ENCODE measurements at regions of chr3 and their contacts with region 1.

Region 1: GRCh38 chr3:105366326-105367062 is at the start of gene ALCAM:
- DNase-seq: peak; percentile 99
- ATAC-seq: peak; percentile 72
- H3K4me3 ChIP-seq: peak within 1 kb of the TSS; percentile 83
- H3K27ac ChIP-seq: peak within 1 kb of the TSS; percentile 96
- H3K4me1 ChIP-seq: peaks cover 49% of the 10 kb centered on the region
- H3K27me3 ChIP-seq: no peaks in the 10 kb centered on the region
- CTCF ChIP-seq: peak; percentile 76
- total RNA-seq, gene ALCAM: 168 and 169 TPM in 2 replicates

Region 2: DNA sequence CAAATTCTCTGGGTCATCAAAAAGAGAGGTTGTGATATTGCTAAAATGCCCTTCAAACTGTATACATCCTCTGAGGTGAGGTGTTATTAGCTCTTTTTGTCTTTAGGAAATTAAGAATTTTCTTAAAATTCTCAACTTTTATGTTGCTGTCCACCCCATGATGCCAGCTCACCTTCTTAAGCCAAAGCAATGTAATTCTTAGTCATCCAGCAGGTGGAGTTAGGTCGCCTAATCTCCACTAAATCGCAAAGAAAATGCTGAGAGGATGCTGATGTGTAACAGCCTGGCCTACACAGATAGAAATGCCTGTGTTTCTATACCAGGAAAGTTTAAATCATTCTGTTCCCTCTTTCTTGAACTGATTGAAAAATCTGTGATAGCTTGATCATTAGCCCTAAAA is 769.9 kb before region 1 on chr3:
- CTCF ChIA-PET with region 1: interaction called, 5 read pairs
- POLR2A ChIA-PET with region 1: no interaction called
- intact Hi-C with region 1: loop called (anchors 1 kb)
- DNase-seq: peak; percentile 84
- ATAC-seq: peak; percentile 82
- H3K4me3 ChIP-seq: no peak overlapping the region
- H3K27ac ChIP-seq: peak overlapping the region; percentile 38
- H3K4me1 ChIP-seq: peaks cover 28% of the 10 kb centered on the region
- H3K27me3 ChIP-seq: no peaks in the 10 kb centered on the region
- CTCF ChIP-seq: peak; percentile 86

Region 3: DNA sequence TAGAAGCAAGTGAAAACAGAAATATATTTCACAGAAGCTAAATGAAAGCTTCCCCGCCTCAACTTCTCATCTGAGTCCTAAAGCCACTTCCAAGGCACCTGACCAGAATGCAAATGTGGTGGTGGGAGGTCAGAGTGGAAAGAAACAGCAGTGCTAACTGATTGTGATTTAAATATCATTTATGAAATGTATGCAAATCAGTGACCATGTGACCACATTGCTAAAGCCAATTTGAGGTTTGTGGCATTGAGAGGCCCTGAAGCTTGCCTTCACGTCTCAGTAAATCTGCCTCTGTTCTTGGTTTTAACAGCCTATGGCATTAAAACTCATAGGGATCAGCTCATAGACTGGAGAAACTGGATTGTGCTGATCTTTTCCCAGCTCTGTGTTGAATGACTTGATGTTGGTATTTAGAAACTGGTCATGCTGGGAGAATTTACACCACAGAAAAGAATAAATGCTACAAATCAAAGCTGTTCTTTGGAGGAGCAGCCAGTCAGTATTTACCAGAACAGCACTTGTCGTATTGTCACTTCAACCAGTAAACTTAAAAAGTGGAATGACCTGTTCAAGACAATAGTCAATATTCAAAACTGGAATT is 481.2 kb before region 1 on chr3:
- CTCF ChIA-PET with region 1: interaction called, 3 read pairs
- POLR2A ChIA-PET with region 1: no interaction called
- intact Hi-C with region 1: loop called (anchors 1 kb)
- DNase-seq: peak; percentile 89
- ATAC-seq: peak; percentile 72
- H3K4me3 ChIP-seq: peak overlapping the region; percentile 8; the same call in 1 of the 2 replicates
- H3K27ac ChIP-seq: peak overlapping the region; percentile 74
- H3K4me1 ChIP-seq: peaks cover 28% of the 10 kb centered on the region
- H3K27me3 ChIP-seq: no peaks in the 10 kb centered on the region
- CTCF ChIP-seq: no peak

Region 4: GRCh38 chr3:105118905-105119304 is 247.6 kb before region 1 on chr3:
- CTCF ChIA-PET with region 1: no interaction called
- POLR2A ChIA-PET with region 1: interaction called, 5 read pairs
- intact Hi-C with region 1: loop called (anchors 1 kb)
- DNase-seq: peak; percentile 97
- ATAC-seq: peak; percentile 72
- H3K4me3 ChIP-seq: no peak overlapping the region
- H3K27ac ChIP-seq: peak overlapping the region; percentile 91
- H3K4me1 ChIP-seq: peaks cover 17% of the 10 kb centered on the region
- H3K27me3 ChIP-seq: no peaks in the 10 kb centered on the region
- CTCF ChIP-seq: no peak

Region 5: GRCh38 chr3:105260385-105260784 is 106.1 kb before region 1 on chr3:
- CTCF ChIA-PET with region 1: no interaction called
- POLR2A ChIA-PET with region 1: no interaction called
- intact Hi-C with region 1: no loop called
- DNase-seq: no peak
- ATAC-seq: no peak
- H3K4me3 ChIP-seq: no peak overlapping the region
- H3K27ac ChIP-seq: no peak overlapping the region
- H3K4me1 ChIP-seq: no peaks in the 10 kb centered on the region
- H3K27me3 ChIP-seq: no peaks in the 10 kb centered on the region
- CTCF ChIP-seq: no peak

Region 6: DNA sequence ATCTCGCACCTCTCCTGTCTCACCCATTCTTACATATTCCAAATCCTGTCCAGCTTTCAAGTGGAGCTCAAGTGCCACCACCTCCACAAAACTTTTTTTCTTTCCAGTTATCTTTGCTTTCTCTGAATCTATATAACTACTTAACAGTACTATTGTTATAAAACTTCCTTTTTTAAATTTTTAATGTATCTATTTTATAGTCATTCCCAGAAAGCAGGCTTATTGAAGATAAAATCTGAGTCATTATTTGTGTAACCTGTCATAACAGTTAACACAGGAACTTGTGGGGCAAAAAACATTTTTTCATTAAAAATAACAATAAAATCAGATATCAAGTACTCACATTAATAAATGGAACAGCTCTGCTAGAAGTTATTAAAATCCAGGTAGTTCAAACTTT is 73.1 kb before region 1 on chr3:
- CTCF ChIA-PET with region 1: no interaction called
- POLR2A ChIA-PET with region 1: no interaction called
- intact Hi-C with region 1: loop called (anchors 2 kb)
- DNase-seq: peak; percentile 60
- ATAC-seq: peak; percentile 92
- H3K4me3 ChIP-seq: no peak overlapping the region
- H3K27ac ChIP-seq: no peak overlapping the region
- H3K4me1 ChIP-seq: peaks cover 13% of the 10 kb centered on the region
- H3K27me3 ChIP-seq: no peaks in the 10 kb centered on the region
- CTCF ChIP-seq: no peak

Region 7: GRCh38 chr3:105322570-105323273 is 43.8 kb before region 1 on chr3:
- CTCF ChIA-PET with region 1: no interaction called
- POLR2A ChIA-PET with region 1: no interaction called
- intact Hi-C with region 1: no loop called
- DNase-seq: no peak
- ATAC-seq: no peak
- H3K4me3 ChIP-seq: no peak overlapping the region
- H3K27ac ChIP-seq: no peak overlapping the region
- H3K4me1 ChIP-seq: peaks cover 7% of the 10 kb centered on the region
- H3K27me3 ChIP-seq: no peaks in the 10 kb centered on the region
- CTCF ChIP-seq: no peak

Region 8: DNA sequence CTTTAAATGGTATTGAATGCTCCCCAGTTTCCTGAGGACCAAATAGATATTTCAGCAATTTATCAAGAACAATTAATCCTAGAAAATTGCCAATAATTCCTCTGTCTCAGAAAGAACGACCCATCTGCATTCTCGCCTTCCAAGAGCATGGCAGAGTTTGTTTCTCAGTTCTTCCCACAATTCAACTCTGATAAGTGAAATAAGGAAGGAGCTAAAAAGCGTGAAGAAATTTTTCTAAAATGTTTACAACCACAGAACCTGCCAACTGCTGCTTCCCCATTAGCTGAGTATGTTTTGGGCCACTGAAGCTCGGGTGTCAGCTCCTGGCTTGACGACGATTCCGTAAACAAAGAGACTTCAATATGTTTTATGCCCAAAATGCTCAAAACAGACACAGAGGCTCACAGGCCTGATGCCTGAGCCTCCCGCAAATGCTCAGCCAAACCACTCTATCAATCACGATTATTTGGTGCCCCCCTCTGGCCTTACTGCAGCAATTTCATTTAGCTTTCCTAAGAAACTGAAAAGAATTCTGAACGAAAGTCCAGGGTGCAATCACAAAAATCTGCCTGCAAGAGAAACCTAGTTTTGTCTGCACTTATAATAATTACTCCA is 1751.5 kb after region 1 on chr3:
- CTCF ChIA-PET with region 1: no interaction called
- POLR2A ChIA-PET with region 1: no interaction called
- intact Hi-C with region 1: loop called (anchors 5 kb)
- DNase-seq: peak; percentile 78
- ATAC-seq: peak; percentile 74
- H3K4me3 ChIP-seq: no peak overlapping the region
- H3K27ac ChIP-seq: no peak overlapping the region
- H3K4me1 ChIP-seq: peaks cover 9% of the 10 kb centered on the region; the same call in 1 of the 2 replicates
- H3K27me3 ChIP-seq: no peaks in the 10 kb centered on the region
- CTCF ChIP-seq: peak; percentile 90